CD8-positive, alpha-beta memory T cell (primary cell): ENCODE measurements at regions of chr5 and their contacts with region 1.

Region 1: DNA sequence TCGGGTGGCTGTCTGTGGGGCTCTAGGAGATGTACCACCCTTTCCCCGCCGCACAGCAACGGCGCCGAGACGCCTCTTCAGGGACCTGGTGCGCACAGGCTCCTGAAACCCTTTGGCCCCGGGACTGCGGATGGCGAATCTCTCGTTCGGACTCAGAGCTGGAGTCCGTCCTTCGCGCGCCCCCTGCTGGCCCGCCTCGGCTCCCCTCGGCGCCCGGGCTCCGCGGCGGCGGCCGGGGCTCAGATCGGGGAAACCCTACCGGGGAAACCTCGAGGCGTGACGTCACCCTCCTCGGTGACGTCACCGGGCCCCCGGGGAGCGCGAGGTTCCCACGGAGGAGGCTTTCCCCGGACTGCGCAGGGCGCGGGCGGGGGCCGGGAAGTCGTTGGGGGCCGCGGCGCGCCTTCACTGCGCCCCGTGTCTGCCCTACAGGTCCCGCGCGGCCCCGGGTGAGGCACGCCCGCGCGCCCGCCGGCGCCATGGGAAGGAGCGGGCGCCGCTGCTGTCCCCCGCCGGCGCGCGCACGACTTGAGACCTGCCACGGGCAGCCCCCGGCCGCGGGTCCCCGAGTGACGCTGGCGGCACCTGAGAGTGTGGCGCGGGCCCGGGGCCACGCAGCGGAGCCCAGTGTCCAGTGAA is 7.9 kb downstream of the PRR7 start:
- DNase-seq: peak; percentile 90 to 97 (median 95)
- H3K4me3 ChIP-seq: peak overlapping the region; percentile 59
- H3K4me3 Mint-ChIP-seq: peak overlapping the region; percentile 46 to 93 (median 89)
- H3K27ac ChIP-seq: peak overlapping the region; percentile 87
- H3K27ac Mint-ChIP-seq: peak overlapping the region in 7 of 8 donors; percentile 66 to 97 (median 85)
- H3K4me1 ChIP-seq: peaks cover 20% of the 10 kb centered on the region
- H3K4me1 Mint-ChIP-seq: peaks cover 19 to 32% (median 19%) of the 10 kb centered on the region in 3 donors
- H3K27me3 ChIP-seq: no peaks in the 10 kb centered on the region
- H3K27me3 Mint-ChIP-seq: peaks cover 0 to 4% of the 10 kb centered on the region in 2 donors

Region 2: DNA sequence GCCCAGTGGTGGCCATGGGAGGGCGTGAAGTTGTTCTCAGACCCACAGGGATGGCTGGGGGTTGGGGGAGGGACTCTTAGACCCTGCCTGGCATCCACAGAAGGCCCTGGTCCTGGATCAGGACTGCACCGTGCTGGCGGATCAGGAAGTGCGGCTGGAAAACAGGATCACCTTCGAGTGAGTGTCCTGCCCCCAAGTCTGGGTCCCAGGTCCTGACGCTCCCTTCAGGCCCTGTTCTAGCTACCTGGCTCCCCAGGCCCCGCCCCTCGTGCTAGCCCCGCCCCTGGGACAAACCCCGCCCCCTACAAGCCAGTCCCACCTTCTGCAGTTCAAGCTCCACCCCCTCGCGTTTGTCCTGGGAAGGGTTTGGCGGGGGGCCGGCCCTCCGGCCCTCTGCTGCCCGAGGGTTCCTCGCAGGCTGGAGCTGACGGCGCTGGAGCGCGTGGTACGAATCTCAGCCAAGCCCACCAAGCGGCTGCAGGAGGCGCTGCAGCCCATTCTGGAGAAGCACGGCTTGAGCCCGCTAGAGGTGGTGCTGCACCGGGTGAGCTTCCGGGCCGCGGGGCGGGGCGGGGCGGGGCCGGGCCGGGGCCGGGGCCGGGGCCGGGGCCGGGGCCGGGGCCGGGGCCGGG is 83.9 kb before region 1 on chr5:
- CTCF ChIA-PET with region 1: interaction called, 31 read pairs
- POLR2A ChIA-PET with region 1: interaction called, 11 read pairs
- DNase-seq: peak; percentile 36 to 78 (median 50)
- H3K4me3 ChIP-seq: no peak overlapping the region
- H3K4me3 Mint-ChIP-seq: peak overlapping the region in 2 of 7 donors; percentile 43 to 64
- H3K27ac ChIP-seq: no peak overlapping the region
- H3K27ac Mint-ChIP-seq: peak overlapping the region in 3 of 8 donors; percentile 29 to 81 (median 51)
- H3K4me1 ChIP-seq: peaks cover 66% of the 10 kb centered on the region
- H3K4me1 Mint-ChIP-seq: peaks cover 57 to 77% (median 64%) of the 10 kb centered on the region in 3 donors
- H3K27me3 ChIP-seq: no peaks in the 10 kb centered on the region
- H3K27me3 Mint-ChIP-seq: peaks cover 0 to 1% of the 10 kb centered on the region in 2 donors

Region 3: GRCh38 chr5:177425801-177426565 is 28.5 kb before region 1 on chr5:
- CTCF ChIA-PET with region 1: interaction called, 326 read pairs
- POLR2A ChIA-PET with region 1: interaction called, 154 read pairs
- DNase-seq: peak; percentile 99 to 100 (median 100)
- H3K4me3 ChIP-seq: peak overlapping the region; percentile 93
- H3K4me3 Mint-ChIP-seq: peak overlapping the region; percentile 89 to 96 (median 95)
- H3K27ac ChIP-seq: peak overlapping the region; percentile 90
- H3K27ac Mint-ChIP-seq: peak overlapping the region; percentile 92 to 99 (median 98)
- H3K4me1 ChIP-seq: peaks cover 55% of the 10 kb centered on the region
- H3K4me1 Mint-ChIP-seq: peaks cover 45 to 60% (median 51%) of the 10 kb centered on the region in 3 donors
- H3K27me3 ChIP-seq: no peaks in the 10 kb centered on the region
- H3K27me3 Mint-ChIP-seq: peaks cover 0 to 2% of the 10 kb centered on the region in 2 donors

Region 4: DNA sequence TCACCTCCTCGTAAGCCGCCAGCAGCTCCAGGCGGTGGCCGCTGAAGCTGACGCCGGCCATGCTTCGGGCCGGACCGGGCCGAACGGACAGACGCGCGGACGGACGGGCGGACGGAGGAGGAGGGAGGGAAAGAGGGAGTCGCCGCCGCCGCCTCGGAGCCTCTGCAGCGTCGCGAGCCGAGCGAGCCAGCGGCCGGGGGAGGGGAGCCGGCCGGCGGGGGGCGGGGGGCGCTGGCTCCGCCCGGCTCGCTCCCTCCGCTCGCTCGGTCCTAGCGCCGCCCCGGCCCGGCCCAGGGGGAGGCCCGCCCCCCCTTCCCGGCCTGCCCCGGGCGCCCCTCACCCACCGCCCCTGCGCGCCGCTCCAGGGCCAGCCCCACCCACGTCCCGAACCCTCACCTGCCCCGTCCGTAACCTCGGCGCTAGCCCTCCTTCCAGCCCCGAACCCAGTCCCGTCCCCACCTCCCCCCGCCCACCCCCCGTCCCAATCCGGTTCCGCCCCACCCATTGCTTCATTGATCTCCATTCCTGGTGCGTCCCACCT is 19.0 kb after region 1 on chr5 and contains the start of gene DBN1:
- CTCF ChIA-PET with region 1: interaction called, 103 read pairs
- POLR2A ChIA-PET with region 1: interaction called, 18 read pairs
- DNase-seq: no peak
- H3K4me3 ChIP-seq: peak within 1 kb of the TSS; percentile 45
- H3K4me3 Mint-ChIP-seq: peak within 1 kb of the TSS; percentile 80 to 94 (median 84)
- H3K27ac ChIP-seq: peak within 1 kb of the TSS; percentile 47
- H3K27ac Mint-ChIP-seq: peak within 1 kb of the TSS; percentile 3 to 92 (median 76)
- H3K4me1 ChIP-seq: peaks cover 30% of the 10 kb centered on the region
- H3K4me1 Mint-ChIP-seq: peaks cover 34 to 56% (median 36%) of the 10 kb centered on the region in 3 donors
- H3K27me3 ChIP-seq: no peaks in the 10 kb centered on the region
- H3K27me3 Mint-ChIP-seq: peaks cover 0 to under 1% of the 10 kb centered on the region in 2 donors
- total RNA-seq, gene DBN1: 47.9 to 50.5 TPM

Region 5: DNA sequence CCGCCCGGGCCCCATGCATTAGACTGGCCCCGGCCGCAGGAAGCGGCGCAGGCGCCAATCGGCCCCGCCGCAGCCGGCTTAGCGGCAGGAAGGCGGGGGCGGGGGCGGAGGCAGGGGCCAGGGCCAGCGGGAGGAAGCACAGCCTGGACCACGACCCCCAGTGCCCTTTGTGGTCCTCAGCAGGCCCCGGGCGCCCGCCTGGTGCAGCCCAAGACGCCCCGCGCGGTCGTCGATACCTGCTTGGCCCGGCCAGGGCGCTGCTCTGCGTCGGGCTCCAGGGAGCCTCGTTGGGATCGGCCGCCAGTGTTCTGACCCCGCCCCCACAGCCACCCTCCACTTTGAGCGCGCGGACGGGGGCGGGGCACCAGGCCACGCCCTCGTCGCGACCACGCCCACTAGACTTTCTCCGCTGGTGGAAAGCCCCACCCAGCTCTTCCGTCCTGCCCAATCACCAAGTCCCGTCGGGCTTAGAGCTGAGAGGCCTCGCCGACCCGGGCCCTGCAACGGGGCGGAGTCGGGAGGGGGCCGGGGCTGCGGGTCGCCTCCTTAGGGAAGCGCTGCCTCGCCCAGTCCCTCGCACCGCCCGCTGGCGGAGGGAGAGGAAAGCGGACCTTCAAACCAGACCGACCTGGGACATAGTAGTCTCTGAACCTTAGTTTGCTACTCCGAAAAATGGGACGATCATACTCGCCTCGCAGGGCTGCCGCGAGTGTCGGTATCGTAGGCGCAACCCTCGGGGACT is 42.9 kb after region 1 on chr5 and contains the start of gene PDLIM7:
- CTCF ChIA-PET with region 1: interaction called, 116 read pairs
- POLR2A ChIA-PET with region 1: interaction called, 15 read pairs
- DNase-seq: peak; percentile 89 to 95 (median 90)
- H3K4me3 ChIP-seq: peak within 1 kb of the TSS; percentile 81
- H3K4me3 Mint-ChIP-seq: peak within 1 kb of the TSS; percentile 69 to 89 (median 86)
- H3K27ac ChIP-seq: peak within 1 kb of the TSS; percentile 69
- H3K27ac Mint-ChIP-seq: peak within 1 kb of the TSS in 7 of 8 donors; percentile 0 to 91 (median 75)
- H3K4me1 ChIP-seq: peaks cover 22% of the 10 kb centered on the region
- H3K4me1 Mint-ChIP-seq: peaks cover 13 to 42% (median 23%) of the 10 kb centered on the region in 3 donors
- H3K27me3 ChIP-seq: no peaks in the 10 kb centered on the region
- H3K27me3 Mint-ChIP-seq: peaks cover 0 to 2% of the 10 kb centered on the region in 2 donors
- total RNA-seq, gene PDLIM7: 28.4 to 30.4 TPM

Region 6: GRCh38 chr5:177557041-177557647 is 102.6 kb after region 1 on chr5:
- CTCF ChIA-PET with region 1: no interaction called
- POLR2A ChIA-PET with region 1: no interaction called
- DNase-seq: peak in 1 of 5 donors; percentile 10
- H3K4me3 ChIP-seq: no peak overlapping the region
- H3K4me3 Mint-ChIP-seq: peak overlapping the region in 1 of 7 donors; percentile 76
- H3K27ac ChIP-seq: peak overlapping the region; percentile 26
- H3K27ac Mint-ChIP-seq: peak overlapping the region in 7 of 8 donors; percentile 33 to 74 (median 60)
- H3K4me1 ChIP-seq: peaks cover 20% of the 10 kb centered on the region
- H3K4me1 Mint-ChIP-seq: peaks cover 30 to 45% (median 39%) of the 10 kb centered on the region in 3 donors
- H3K27me3 ChIP-seq: no peaks in the 10 kb centered on the region
- H3K27me3 Mint-ChIP-seq: no peaks in the 10 kb centered on the region

Region 7: DNA sequence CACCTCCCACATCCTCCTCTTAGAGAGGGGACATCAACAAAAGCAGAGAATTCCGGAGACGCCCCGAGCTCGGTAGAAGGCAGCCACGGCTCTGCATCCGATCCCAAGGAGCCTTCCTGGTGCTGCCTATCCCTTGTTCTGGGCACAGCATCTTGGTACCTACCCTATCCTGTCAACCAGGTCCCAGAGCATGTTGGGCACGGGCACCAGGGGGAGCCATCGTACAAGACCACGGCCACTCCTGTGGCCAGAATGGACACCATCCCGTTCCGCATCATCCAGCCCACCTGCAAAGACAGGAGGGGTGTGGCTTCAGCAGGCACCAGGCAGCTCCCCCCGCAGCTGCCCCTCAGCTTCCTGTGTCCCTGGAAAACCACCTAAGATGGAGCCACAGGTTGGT is 1338.6 kb after region 1 on chr5:
- CTCF ChIA-PET with region 1: no interaction called
- POLR2A ChIA-PET with region 1: no interaction called
- DNase-seq: no peak
- H3K4me3 ChIP-seq: no peak overlapping the region
- H3K4me3 Mint-ChIP-seq: no peak overlapping the region
- H3K27ac ChIP-seq: no peak overlapping the region
- H3K27ac Mint-ChIP-seq: no peak overlapping the region
- H3K4me1 ChIP-seq: no peaks in the 10 kb centered on the region
- H3K4me1 Mint-ChIP-seq: peaks cover 0 to 2% (median 0%) of the 10 kb centered on the region in 3 donors
- H3K27me3 ChIP-seq: no peaks in the 10 kb centered on the region
- H3K27me3 Mint-ChIP-seq: peaks cover 8 to 14% of the 10 kb centered on the region in 2 donors